ENCODE measurements at regions of chr20 and their contacts with region 1.

Region 1: DNA sequence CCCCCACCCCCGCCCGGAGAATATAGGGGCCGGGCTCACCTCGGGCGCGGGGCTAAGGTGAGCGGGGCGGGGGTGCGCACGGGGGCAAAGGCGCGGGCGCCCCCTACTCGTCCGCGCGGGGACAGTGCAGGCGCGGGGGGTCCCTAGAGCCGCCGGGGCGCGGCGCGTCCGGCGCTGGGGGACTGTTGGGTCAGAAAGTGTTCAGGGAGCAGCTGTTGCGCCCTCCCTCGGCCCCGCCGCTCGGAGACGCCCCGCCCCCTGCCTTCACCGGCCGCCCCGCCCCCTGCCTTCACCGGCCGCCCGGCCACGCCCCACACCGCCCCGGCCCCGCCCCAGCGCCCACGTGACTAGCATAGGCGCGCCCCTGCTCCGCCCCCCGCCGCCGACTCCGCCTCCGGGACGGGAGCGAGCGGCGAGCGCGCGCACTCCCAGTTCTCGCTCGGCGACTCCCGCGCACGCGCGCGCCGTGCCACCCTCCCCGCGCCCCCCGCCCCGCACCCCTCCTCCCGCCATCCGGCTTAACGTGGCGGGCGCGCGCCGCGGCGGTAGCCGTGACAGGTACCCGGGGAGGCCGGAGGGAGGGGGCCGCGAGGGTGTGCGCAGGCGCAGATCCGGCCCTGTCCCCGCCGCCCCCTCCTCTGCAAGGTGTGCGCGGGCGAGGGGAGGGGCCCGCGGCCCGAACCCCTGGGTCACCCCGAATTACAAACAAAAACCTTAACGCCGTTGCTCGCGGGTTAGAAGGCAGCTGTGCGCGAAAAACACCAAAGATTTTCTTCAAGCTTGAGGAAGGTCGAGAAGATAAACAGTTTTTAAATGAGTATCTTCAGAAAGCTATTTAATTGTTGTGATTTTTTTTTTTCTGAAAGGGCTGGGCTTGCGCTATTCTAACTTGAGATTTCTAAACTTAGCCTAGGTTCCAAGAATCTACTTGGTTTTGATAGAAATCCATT is 704 bp upstream of the ZNF217 start:
- DNase-seq: peak; percentile 90
- ATAC-seq: peak; percentile 83
- H3K4me3 ChIP-seq: peak overlapping the region; percentile 97
- H3K27ac ChIP-seq: peak overlapping the region; percentile 97
- H3K4me1 ChIP-seq: peaks cover 5% of the 10 kb centered on the region
- H3K27me3 ChIP-seq: no peaks in the 10 kb centered on the region
- CTCF ChIP-seq: peak; percentile 24; the same call in 1 of the 2 replicates
- POLR2A ChIP-seq: 0 out of 2 replicates have a peak, but pooled peaks have one; percentile 30
- RAD21 ChIP-seq: 0 out of 2 replicates have a peak, but pooled peaks have one; percentile 20

Region 2: DNA sequence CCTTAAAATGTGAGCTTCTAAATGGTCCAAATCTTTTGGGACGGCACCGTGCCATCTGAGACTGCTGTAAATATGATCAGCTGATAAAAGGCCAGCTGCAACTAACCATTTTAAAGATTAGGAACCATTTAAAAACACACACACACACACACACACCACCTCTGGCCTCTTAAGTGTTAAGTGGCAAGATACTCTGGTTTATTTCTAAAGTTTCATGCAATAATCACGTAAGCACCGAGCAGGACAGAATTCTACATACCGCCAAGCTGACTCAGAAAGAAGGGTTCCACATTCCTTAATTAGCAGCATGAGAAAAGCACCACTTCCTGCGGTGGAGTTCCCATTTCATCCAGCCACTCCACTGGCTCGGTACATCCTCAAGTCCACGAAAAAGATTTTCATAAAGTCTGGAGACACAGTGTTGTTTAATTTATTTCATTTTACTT is 17.1 kb after region 1 on chr20:
- CTCF ChIA-PET with region 1: no interaction called
- POLR2A ChIA-PET with region 1: interaction called, 5 read pairs
- dilution Hi-C with region 1: no loop called
- in situ Hi-C with region 1: no loop called
- intact Hi-C with region 1: loop called (anchors 2 kb)
- DNase-seq: peak; percentile 99
- ATAC-seq: peak; percentile 90
- H3K4me3 ChIP-seq: peak overlapping the region; percentile 4; the same call in 1 of the 2 replicates
- H3K27ac ChIP-seq: peak overlapping the region; percentile 81
- H3K4me1 ChIP-seq: peaks cover 18% of the 10 kb centered on the region
- H3K27me3 ChIP-seq: no peaks in the 10 kb centered on the region
- CTCF ChIP-seq: no peak
- POLR2A ChIP-seq: peak; percentile 80
- RAD21 ChIP-seq: peak; percentile 29; the same call in 1 of the 2 replicates

Region 3: DNA sequence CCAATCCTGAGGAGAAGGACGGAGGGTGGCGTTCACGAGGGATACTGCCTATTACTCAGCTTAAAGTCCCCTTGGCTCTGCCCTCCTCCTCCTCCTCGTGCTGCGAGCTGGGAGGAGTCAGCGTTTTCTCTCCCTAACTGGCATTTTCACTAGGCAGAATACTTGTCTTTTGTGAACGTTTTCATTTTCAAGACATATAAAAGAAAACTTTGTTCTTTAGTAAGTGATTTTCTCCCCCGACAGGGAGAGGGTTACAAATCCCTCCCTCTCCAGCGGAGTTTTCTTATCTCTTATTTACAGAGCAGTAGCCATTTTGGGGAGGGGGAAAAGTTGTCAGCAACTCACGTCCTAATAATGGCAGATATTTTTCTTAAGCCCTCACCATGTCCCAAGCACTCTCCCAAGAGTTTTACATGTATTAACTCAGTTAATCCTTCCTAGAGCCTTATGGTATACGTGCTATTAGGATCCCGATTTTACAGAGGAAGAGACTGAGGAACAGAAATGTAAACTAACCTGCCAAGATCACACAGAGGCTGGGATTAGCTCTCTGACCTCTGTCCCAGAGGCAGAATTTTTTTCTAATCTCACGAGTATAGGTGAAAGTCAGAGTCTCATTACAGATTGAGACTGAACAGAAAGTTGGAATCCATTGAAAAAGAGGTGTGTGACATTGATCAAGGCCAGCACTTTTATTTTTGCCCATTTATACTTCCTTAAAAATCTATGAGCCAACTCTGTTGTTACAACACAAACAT is 29.3 kb after region 1 on chr20:
- CTCF ChIA-PET with region 1: no interaction called
- POLR2A ChIA-PET with region 1: interaction called, 15 read pairs
- dilution Hi-C with region 1: no loop called
- in situ Hi-C with region 1: no loop called
- intact Hi-C with region 1: no loop called
- DNase-seq: peak; percentile 77
- ATAC-seq: peak; percentile 87
- H3K4me3 ChIP-seq: peak overlapping the region; percentile 43
- H3K27ac ChIP-seq: peak overlapping the region; percentile 65
- H3K4me1 ChIP-seq: peaks cover 15% of the 10 kb centered on the region
- H3K27me3 ChIP-seq: no peaks in the 10 kb centered on the region
- CTCF ChIP-seq: 0 out of 2 replicates have a peak, but pooled peaks have one; percentile 12
- POLR2A ChIP-seq: peak; percentile 66
- RAD21 ChIP-seq: peak; percentile 14; the same call in 1 of the 2 replicates

Region 4: DNA sequence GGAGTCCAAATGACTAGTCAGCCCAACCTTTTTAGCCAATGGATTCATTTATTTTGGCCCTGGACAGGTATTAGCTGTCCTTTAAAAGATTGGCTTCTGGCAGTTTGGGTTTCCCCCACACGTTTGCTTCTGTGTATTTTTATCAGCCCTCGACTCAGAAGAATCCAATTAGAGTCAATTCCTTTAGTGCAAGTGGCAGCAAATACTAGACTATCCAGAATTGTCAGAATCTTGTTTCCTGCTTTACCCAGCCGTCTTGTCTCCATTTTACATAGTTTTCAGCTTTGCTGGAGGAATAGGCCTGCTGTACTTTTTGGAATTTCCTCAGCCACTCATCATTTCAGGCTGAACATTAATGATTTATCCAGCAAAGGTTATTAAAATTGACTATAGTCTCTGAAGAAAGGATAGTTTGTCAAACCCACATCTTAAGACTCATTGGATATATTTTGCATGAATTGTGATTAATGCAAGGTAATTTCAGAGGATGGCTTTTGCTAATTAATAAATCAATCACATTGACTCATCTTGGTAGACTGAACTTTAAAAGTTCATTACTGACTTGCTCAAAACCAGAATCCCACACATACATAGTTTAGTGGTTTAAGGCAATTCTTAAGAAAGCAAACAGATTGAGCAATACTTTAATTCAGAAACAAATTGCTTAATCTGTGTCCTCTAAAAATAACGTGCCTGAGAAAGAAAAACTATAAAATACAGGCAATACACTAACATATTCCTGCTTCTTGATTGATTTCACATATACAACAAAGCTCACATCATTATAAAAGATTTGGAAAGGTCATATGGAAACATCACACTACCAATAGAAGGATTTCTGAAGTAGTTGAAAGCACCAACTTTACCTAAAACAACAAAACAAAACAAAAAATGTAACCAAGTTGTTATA is 62.2 kb after region 1 on chr20:
- CTCF ChIA-PET with region 1: no interaction called
- POLR2A ChIA-PET with region 1: no interaction called
- dilution Hi-C with region 1: no loop called
- in situ Hi-C with region 1: no loop called
- intact Hi-C with region 1: loop called (anchors 5 kb)
- DNase-seq: peak; percentile 76
- ATAC-seq: peak; percentile 44; the same call in 1 of the 2 replicates
- H3K4me3 ChIP-seq: no peak overlapping the region
- H3K27ac ChIP-seq: peak overlapping the region; percentile 50; the same call in 1 of the 2 replicates
- H3K4me1 ChIP-seq: peaks cover 30% of the 10 kb centered on the region
- H3K27me3 ChIP-seq: no peaks in the 10 kb centered on the region
- CTCF ChIP-seq: no peak
- POLR2A ChIP-seq: no peak
- RAD21 ChIP-seq: no peak

Region 5: GRCh38 chr20:53738039-53738944 is 143.9 kb after region 1 on chr20:
- CTCF ChIA-PET with region 1: no interaction called
- POLR2A ChIA-PET with region 1: no interaction called
- dilution Hi-C with region 1: no loop called
- in situ Hi-C with region 1: no loop called
- intact Hi-C with region 1: loop called (anchors 5 kb)
- DNase-seq: peak; percentile 90
- ATAC-seq: peak; percentile 82
- H3K4me3 ChIP-seq: peak overlapping the region; percentile 22; the same call in 1 of the 2 replicates
- H3K27ac ChIP-seq: peak overlapping the region; percentile 75
- H3K4me1 ChIP-seq: peaks cover 28% of the 10 kb centered on the region
- H3K27me3 ChIP-seq: no peaks in the 10 kb centered on the region
- CTCF ChIP-seq: no peak
- POLR2A ChIP-seq: peak; percentile 75
- RAD21 ChIP-seq: no peak

Region 6: GRCh38 chr20:53974785-53975555 is 380.6 kb after region 1 on chr20:
- CTCF ChIA-PET with region 1: no interaction called
- POLR2A ChIA-PET with region 1: interaction called, 11 read pairs
- dilution Hi-C with region 1: no loop called
- in situ Hi-C with region 1: no loop called
- intact Hi-C with region 1: no loop called
- DNase-seq: no peak
- ATAC-seq: no peak
- H3K4me3 ChIP-seq: no peak overlapping the region
- H3K27ac ChIP-seq: no peak overlapping the region
- H3K4me1 ChIP-seq: no peaks in the 10 kb centered on the region
- H3K27me3 ChIP-seq: peaks cover 3% of the 10 kb centered on the region; the same call in 1 of the 2 replicates
- CTCF ChIP-seq: no peak
- POLR2A ChIP-seq: no peak
- RAD21 ChIP-seq: no peak

Measured in IMR-90 (cell line).